ENCODE measurements at regions of chr3 and their contacts with region 1.

Region 1: GRCh38 chr3:3126477-3127431 is at the start of gene TRNT1:
- DNase-seq: peak; percentile 94
- H3K4me3 Mint-ChIP-seq: peak within 1 kb of the TSS; percentile 97
- H3K27ac Mint-ChIP-seq: peak within 1 kb of the TSS; percentile 99
- H3K4me1 Mint-ChIP-seq: peaks cover 5% of the 10 kb centered on the region
- H3K27me3 Mint-ChIP-seq: no peaks in the 10 kb centered on the region
- CTCF ChIP-seq: no peak
- total RNA-seq, gene TRNT1: 27.6 and 39.7 TPM in 2 replicates

Region 2: DNA sequence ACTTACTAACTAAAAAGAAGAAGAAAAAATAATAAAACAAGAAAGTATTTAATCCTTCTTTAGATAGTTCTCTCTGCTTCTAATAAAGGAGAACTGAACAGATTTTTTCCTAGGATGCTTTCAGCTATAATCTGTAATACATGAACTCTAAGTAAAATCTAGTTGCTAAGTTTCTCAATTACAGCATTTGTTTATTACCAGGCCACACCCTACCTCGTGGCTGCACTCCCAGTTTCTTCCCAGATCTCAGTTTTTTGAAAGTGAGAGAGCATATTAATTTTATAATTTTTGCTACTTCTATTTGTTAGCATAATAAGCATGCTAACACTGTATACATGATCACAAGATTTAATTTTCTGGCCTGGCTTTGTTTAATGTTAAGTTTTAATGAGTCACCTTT is 274.9 kb before region 1 on chr3:
- CTCF ChIA-PET with region 1: no interaction called
- POLR2A ChIA-PET with region 1: no interaction called
- intact Hi-C with region 1: no loop called
- DNase-seq: no peak
- H3K4me3 Mint-ChIP-seq: no peak overlapping the region
- H3K27ac Mint-ChIP-seq: no peak overlapping the region
- H3K4me1 Mint-ChIP-seq: peaks cover 6% of the 10 kb centered on the region
- H3K27me3 Mint-ChIP-seq: peaks cover 53% of the 10 kb centered on the region
- CTCF ChIP-seq: no peak

Region 3: GRCh38 chr3:3068358-3068881 is 58.3 kb before region 1 on chr3:
- CTCF ChIA-PET with region 1: no interaction called
- POLR2A ChIA-PET with region 1: interaction called, 3 read pairs
- intact Hi-C with region 1: loop called (anchors 1 kb)
- DNase-seq: peak; percentile 64
- H3K4me3 Mint-ChIP-seq: no peak overlapping the region
- H3K27ac Mint-ChIP-seq: no peak overlapping the region
- H3K4me1 Mint-ChIP-seq: peaks cover 22% of the 10 kb centered on the region
- H3K27me3 Mint-ChIP-seq: no peaks in the 10 kb centered on the region
- CTCF ChIP-seq: no peak

Region 4: GRCh38 chr3:3792371-3792770 is 665.6 kb after region 1 on chr3:
- CTCF ChIA-PET with region 1: no interaction called
- POLR2A ChIA-PET with region 1: no interaction called
- intact Hi-C with region 1: no loop called
- DNase-seq: no peak
- H3K4me3 Mint-ChIP-seq: no peak overlapping the region
- H3K27ac Mint-ChIP-seq: no peak overlapping the region
- H3K4me1 Mint-ChIP-seq: peaks cover 19% of the 10 kb centered on the region
- H3K27me3 Mint-ChIP-seq: no peaks in the 10 kb centered on the region
- CTCF ChIP-seq: no peak

Measured in MCF 10A (cell line).